Mammary epithelial cell (primary cell): ENCODE measurements at regions of chr11 and their contacts with region 1.

Region 1: GRCh38 chr11:69854719-69855118 is 35.5 kb upstream of the FGF3 start:
- DNase-seq: peak; percentile 81
- H3K4me3 ChIP-seq: no peak overlapping the region
- H3K27ac ChIP-seq: peak overlapping the region; percentile 67
- H3K4me1 ChIP-seq: peaks cover 3% of the 10 kb centered on the region
- H3K27me3 ChIP-seq: no peaks in the 10 kb centered on the region
- CTCF ChIP-seq: no peak

Region 2: DNA sequence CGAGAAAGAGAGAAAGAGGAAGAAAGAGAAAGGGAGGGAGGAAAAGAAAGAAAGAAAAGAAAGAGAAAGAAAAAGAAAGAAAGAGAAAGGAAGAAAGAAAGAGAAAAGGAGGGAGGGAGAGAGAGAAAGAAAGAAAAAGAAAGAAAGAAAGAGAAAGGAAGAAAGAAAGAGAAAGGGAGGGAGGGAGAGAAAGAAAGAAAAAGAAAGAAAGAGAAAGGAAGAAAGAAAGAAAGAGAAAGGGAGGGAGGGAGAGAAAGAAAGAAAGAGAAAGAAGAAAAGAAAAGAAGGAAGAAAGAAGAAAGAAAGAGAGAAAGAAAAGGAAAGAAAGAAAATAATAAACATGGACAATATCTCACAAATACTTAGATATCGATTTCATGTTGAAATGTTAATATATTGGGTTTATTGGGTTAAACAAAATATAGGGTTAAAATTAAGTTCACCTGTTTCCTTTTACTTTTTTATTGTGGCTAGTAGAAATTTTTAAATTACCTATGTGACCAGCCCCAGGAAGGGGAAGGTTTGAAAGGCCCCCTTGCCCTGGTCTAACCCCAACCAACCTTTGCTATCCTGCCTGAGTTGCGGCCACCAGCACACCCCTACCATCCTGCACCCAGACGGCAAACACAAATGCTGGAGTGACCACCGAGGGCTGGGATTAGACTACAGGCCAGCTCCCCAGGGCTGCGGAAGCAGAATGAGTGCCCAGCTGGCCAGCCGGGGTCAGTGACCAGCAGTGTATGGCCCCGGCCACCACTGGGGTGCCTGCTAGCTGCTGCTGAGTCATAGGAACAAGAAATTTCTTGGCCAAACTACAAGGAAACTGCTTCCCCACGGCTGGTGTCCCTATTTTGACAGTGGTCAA is 45.5 kb after region 1 on chr11:
- CTCF ChIA-PET with region 1: no interaction called
- dilution Hi-C with region 1: loop called (anchors 5 kb)
- in situ Hi-C with region 1: no loop called
- intact Hi-C with region 1: no loop called
- DNase-seq: no peak
- H3K4me3 ChIP-seq: no peak overlapping the region
- H3K27ac ChIP-seq: no peak overlapping the region
- H3K4me1 ChIP-seq: no peaks in the 10 kb centered on the region
- H3K27me3 ChIP-seq: no peaks in the 10 kb centered on the region
- CTCF ChIP-seq: no peak